Spleen (tissue), 13 donors: ENCODE measurements at regions of chr1 and their contacts with region 1.

Region 1: DNA sequence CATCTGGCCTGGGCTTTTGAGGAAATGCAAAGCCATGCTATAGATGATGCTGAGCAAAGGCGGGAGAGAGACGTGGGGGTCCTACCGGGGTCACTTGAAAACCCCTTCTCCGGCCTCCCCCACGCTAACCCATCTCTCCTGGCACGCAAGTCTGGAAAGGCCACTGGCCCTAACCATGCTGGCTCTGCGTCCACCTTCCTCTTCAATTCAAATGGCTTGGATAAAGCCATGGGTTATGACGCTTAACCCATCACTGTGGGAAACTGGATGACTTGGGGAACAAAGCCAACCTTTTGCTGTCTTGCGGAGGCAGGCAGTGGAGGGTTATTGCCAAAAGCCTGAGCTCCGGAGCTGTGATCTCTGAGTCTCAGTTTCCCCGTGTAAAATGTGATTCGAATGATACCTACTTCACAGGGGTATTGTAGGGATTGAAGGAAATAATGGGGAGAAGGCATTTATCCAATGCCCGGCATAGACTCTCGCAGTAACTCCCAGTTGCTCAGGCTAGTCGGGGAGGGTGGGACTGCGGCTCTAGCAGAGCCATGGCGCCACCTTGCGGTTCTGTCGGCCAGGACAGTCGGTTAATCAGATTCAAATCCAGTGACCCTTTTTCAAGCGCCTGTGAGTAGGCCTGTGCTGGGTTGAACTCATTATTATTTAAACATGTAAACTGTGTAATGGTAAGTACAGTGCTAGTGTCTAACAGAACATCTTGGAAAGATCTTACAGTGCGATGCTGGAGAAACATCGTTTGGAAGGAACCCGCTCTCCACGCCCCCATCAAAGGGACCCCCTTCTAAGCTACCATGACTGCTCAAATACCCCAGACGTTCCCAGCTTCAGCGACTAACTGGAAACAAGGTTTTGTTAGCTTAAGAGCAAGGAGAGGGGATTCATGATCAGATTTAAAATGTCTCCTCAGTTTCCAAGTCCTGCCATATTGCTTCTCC is 20.3 kb downstream of the NEK2 start:
- DNase-seq: peak; percentile 95
- H3K4me3 ChIP-seq: peak overlapping the region in 1 of 8 donors; percentile 13
- H3K27ac ChIP-seq: no peak overlapping the region
- H3K4me1 ChIP-seq: peaks cover 0 to 17% (median 10%) of the 10 kb centered on the region in 6 donors
- H3K27me3 ChIP-seq: peaks cover 0 to 6% (median 0%) of the 10 kb centered on the region in 7 donors
- CTCF ChIP-seq: peak; percentile 58 to 92 (median 87)
- POLR2A ChIP-seq: no peak

Region 2: GRCh38 chr1:211515090-211516023 is 139.8 kb before region 1 on chr1:
- intact Hi-C with region 1: loop called (anchors 5 kb)
- DNase-seq: peak; percentile 95
- H3K4me3 ChIP-seq: peak overlapping the region in 7 of 8 donors; percentile 16 to 64 (median 28)
- H3K27ac ChIP-seq: peak overlapping the region in 1 of 8 donors; percentile 33
- H3K4me1 ChIP-seq: peaks cover 6 to 54% (median 30%) of the 10 kb centered on the region in 6 donors
- H3K27me3 ChIP-seq: peaks cover 0 to 16% (median 0%) of the 10 kb centered on the region in 7 donors
- CTCF ChIP-seq: peak; percentile 45 to 99 (median 93)
- POLR2A ChIP-seq: no peak

Region 3: DNA sequence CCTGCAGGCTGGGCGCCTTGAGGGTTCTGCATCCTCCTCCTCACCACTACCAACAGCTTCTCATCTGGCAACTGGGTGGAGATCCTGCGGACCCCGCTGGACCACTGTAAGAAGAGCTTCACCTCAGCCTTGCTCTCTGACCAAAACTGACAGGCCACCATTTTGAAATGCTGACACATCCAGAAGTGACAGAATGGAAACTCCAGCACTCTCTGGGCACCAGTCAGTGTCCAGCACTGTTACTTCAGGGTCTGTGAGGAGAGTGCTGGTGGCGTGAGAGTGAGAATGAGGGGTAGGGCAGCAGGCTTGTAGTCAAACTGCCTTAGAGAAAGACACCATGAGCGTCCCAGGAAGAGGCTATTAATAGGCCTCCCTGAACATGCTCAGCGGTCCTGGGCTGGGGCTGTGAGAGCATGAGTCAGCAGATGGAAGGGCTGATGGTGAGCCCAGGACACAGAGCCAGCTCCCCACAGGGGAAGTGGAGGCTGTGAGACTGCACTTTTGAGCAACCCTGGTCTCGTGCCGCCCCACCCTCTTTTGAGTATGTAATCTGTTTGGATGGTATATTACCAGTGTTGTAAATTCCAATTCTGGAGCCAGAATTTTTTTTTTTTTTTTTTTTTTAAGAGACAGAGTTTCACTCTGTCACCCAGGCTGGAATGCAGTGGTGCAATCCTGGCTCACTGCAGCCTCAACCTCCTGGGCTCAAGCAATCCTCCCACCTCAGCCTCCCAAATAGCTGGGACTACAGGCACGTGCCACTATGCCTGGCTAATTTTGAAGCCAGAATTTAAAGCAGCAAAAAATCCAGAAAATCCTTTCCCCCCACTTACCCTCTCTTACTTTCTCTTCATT is 41.8 kb before region 1 on chr1:
- intact Hi-C with region 1: no loop called
- DNase-seq: peak; percentile 89
- H3K4me3 ChIP-seq: no peak overlapping the region
- H3K27ac ChIP-seq: peak overlapping the region in 7 of 8 donors; percentile 20 to 94 (median 61)
- H3K4me1 ChIP-seq: peaks cover 0 to 63% (median 31%) of the 10 kb centered on the region in 6 donors
- H3K27me3 ChIP-seq: no peaks in the 10 kb centered on the region
- CTCF ChIP-seq: no peak
- POLR2A ChIP-seq: no peak